Body of pancreas (tissue), 4 donors: ENCODE measurements at regions of chr6 and their contacts with region 1.

Region 1: GRCh38 chr6:131909408-131910218 is 41.6 kb downstream of the CCN2 start:
- DNase-seq: peak; percentile 78 to 88 (median 82)
- ATAC-seq: peak; percentile 77
- H3K4me3 ChIP-seq: no peak overlapping the region
- H3K27ac ChIP-seq: no peak overlapping the region
- H3K4me1 ChIP-seq: no peaks in the 10 kb centered on the region
- H3K27me3 ChIP-seq: no peaks in the 10 kb centered on the region
- CTCF ChIP-seq: peak; percentile 34 to 90 (median 82)
- POLR2A ChIP-seq: no peak

Region 2: GRCh38 chr6:131694831-131695426 is 214.7 kb before region 1 on chr6:
- intact Hi-C with region 1: loop called (anchors 10 kb)
- DNase-seq: peak; percentile 38 to 62 (median 44)
- ATAC-seq: peak; percentile 72
- H3K4me3 ChIP-seq: no peak overlapping the region
- H3K27ac ChIP-seq: no peak overlapping the region
- H3K4me1 ChIP-seq: no peaks in the 10 kb centered on the region
- H3K27me3 ChIP-seq: no peaks in the 10 kb centered on the region
- CTCF ChIP-seq: peak; percentile 61 to 81 (median 66)
- POLR2A ChIP-seq: no peak

Region 3: DNA sequence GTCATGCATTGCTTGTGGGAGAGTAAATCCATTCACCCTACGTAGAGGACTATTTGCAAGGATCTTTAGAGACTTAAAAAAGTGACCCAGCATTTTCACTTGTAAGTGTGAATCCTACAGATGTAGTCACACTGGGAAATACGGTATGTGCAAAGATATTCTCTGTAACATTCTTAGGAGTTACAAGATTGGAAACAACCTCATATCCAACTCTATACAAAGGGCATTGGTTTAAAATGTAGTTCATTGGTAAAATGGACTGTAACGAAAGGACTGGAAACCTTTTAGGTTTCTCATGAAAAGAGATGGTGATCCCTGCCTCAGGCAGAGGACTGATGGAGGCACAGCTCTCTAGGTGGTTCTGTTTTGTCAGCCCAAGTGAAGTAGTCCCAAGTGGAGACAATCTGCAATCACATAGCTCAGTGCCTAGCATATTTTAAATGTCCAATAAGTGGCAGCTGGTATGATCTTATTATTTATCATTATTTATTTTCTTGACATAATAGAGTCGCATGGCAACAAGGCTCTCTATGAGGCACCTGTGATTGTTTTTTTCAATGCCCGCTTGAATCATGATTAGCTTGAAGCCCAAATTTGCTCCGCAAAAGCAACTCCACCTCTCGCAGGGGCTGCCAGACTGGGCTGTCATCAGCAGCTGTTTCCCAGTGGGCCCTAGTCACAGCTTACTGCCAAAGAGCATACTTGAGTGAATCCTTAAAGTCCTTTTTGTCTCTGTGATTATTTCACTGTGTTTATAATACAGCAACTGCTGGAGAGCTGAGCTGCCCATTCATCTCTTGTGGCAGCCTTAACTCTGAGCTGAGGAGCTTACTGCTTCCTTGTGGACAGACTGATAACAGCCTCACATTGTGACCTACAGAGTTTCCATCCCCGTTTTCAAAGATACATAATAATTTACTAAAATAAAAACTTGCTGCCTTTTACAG is 121.6 kb before region 1 on chr6:
- intact Hi-C with region 1: loop called (anchors 10 kb)
- DNase-seq: peak in 3 of 4 donors; percentile 10 to 37 (median 15)
- ATAC-seq: peak; percentile 47
- H3K4me3 ChIP-seq: no peak overlapping the region
- H3K27ac ChIP-seq: peak overlapping the region in 1 of 4 donors; percentile 16
- H3K4me1 ChIP-seq: peaks cover 7% of the 10 kb centered on the region
- H3K27me3 ChIP-seq: no peaks in the 10 kb centered on the region
- CTCF ChIP-seq: peak in 1 of 7 experiments; percentile 30
- POLR2A ChIP-seq: no peak